Endothelial cell of umbilical vein (primary cell): ENCODE measurements at regions of chr2 and their contacts with region 1.

Region 1: DNA sequence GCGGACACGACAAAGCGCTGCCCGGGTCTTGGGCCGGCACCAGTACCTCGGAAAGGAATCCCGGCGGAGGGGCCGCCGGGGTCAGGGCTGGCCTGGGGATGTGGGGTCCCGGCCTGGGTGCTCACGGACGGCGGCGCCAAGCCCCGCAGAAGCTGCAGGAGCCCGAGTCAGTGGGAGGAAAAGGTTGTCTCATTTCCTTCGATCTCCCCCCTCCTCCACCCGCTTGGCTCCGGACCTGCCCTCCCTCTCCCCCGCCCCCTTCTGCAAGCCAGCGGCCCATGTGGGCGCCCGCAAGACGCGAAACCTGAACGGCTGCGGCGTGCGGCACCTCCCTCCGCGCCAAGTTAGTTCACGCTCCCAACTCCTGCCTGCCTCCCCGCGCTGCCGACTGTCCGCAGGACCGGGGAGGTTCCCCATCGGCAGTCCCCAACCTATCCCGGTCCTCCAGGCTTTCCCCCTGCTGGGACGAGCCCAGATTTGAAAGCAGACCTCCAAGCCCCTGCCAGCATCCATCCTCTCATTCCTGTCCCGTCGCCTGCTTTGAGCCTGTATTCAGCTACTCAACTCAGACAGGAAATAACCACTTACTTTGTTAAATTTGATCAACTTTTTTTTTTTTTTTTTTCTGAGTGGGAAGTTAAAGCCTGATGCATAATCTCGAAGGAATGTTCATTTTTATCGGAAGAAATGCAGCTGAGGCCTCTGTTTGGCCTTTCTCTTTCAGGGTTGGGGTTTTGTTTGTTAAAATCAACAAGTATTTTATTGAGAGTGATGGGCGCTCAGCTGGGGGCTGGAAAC is at the start of gene EVA1A:
- DNase-seq: peak; percentile 85
- H3K4me3 ChIP-seq: peak within 1 kb of the TSS; percentile 63 to 94 (median 91)
- H3K27ac ChIP-seq: peak within 1 kb of the TSS; percentile 72
- H3K4me1 ChIP-seq: peaks cover 35% of the 10 kb centered on the region
- H3K27me3 ChIP-seq: no peaks in the 10 kb centered on the region
- CTCF ChIP-seq: no peak
- POLR2A ChIP-seq: peak; percentile 78
- total RNA-seq, gene EVA1A: 59.7 and 66.5 TPM in 2 replicates

Region 2: GRCh38 chr2:75548036-75548573 is 12.9 kb before region 1 on chr2:
- CTCF ChIA-PET with region 1: interaction called, 10 read pairs
- POLR2A ChIA-PET with region 1: no interaction called
- dilution Hi-C with region 1: no loop called
- intact Hi-C with region 1: no loop called
- DNase-seq: peak; percentile 34
- H3K4me3 ChIP-seq: no peak overlapping the region
- H3K27ac ChIP-seq: peak overlapping the region; percentile 51
- H3K4me1 ChIP-seq: peaks cover 12% of the 10 kb centered on the region
- H3K27me3 ChIP-seq: no peaks in the 10 kb centered on the region
- CTCF ChIP-seq: no peak
- POLR2A ChIP-seq: no peak

Region 3: GRCh38 chr2:75595551-75596395 is 34.8 kb after region 1 on chr2:
- CTCF ChIA-PET with region 1: no interaction called
- POLR2A ChIA-PET with region 1: no interaction called
- dilution Hi-C with region 1: no loop called
- intact Hi-C with region 1: loop called (anchors 1 kb)
- DNase-seq: peak; percentile 64
- H3K4me3 ChIP-seq: no peak overlapping the region
- H3K27ac ChIP-seq: peak overlapping the region; percentile 63
- H3K4me1 ChIP-seq: peaks cover 3% of the 10 kb centered on the region
- H3K27me3 ChIP-seq: no peaks in the 10 kb centered on the region
- CTCF ChIP-seq: no peak
- POLR2A ChIP-seq: no peak